Activated naive CD4-positive, alpha-beta T cell treated with anti-CD3 and anti-CD28 coated beads for 36 hours (primary cell): ENCODE measurements at regions of chr7 and their contacts with region 1.

Region 1: GRCh38 chr7:90178679-90179278 is 24.5 kb downstream of the STEAP1 start:
- DNase-seq: peak; percentile 63
- H3K4me3 Mint-ChIP-seq: peak overlapping the region; percentile 17
- H3K27ac Mint-ChIP-seq: peak overlapping the region; percentile 94
- H3K4me1 Mint-ChIP-seq: peaks cover 35% of the 10 kb centered on the region
- H3K27me3 Mint-ChIP-seq: peaks cover 8% of the 10 kb centered on the region

Region 2: DNA sequence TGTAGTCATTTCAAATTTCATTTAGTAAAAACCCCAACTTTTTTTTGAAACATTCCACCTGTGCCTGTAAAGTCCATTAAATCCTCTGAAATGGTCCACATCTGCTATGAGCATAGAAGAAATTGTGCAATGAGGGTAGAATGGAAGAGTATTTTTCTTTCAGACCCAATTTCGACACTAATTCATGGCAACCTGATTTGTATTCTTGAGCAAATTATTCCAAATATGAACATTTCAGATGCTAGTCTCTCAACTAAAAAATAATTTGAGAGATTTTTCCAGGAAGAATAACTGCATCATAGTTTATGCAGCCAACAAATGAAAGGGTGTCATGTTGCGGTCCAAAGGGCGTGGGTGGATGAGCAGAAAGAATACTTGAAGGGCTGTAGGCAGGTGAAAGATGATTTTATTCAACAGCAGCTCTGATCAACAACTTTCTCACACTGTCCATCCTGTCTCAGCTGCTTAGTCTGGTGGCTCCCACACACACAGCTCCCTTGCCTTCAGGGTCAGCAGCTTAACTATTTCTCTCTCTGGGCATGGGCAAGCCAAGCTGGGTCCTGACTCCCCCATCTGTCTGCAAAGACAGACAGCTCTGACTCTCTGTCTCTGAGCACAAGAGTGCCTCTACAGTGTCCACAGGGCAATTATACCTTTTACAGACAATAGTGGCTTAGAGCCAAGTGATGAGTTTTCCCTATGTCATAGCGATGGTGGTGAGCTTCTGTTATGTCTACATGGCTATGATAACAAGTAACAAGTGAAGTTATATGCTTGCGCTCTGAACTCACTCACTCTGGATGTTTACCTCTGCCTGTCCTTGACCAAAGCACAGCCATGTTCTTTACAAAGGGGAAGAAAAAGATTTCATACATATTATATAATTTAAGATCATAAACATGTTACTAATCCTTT is 44.3 kb after region 1 on chr7:
- CTCF ChIA-PET with region 1: no interaction called
- intact Hi-C with region 1: no loop called
- DNase-seq: no peak
- H3K4me3 Mint-ChIP-seq: no peak overlapping the region
- H3K27ac Mint-ChIP-seq: no peak overlapping the region
- H3K4me1 Mint-ChIP-seq: no peaks in the 10 kb centered on the region
- H3K27me3 Mint-ChIP-seq: peaks cover 37% of the 10 kb centered on the region

Region 3: GRCh38 chr7:90346336-90347125 is 167.8 kb after region 1 on chr7 and contains the start of gene GTPBP10:
- CTCF ChIA-PET with region 1: no interaction called
- intact Hi-C with region 1: loop called (anchors 1 kb)
- DNase-seq: peak; percentile 96
- H3K4me3 Mint-ChIP-seq: peak within 1 kb of the TSS; percentile 94
- H3K27ac Mint-ChIP-seq: peak within 1 kb of the TSS; percentile 96
- H3K4me1 Mint-ChIP-seq: peaks cover 34% of the 10 kb centered on the region
- H3K27me3 Mint-ChIP-seq: no peaks in the 10 kb centered on the region
- total RNA-seq, gene GTPBP10: 35.8 to 39.3 TPM

Region 4: GRCh38 chr7:90613088-90613498 is 434.3 kb after region 1 on chr7:
- CTCF ChIA-PET with region 1: no interaction called
- intact Hi-C with region 1: loop called (anchors 2 kb)
- DNase-seq: peak; percentile 50
- H3K4me3 Mint-ChIP-seq: no peak overlapping the region
- H3K27ac Mint-ChIP-seq: peak overlapping the region; percentile 70
- H3K4me1 Mint-ChIP-seq: peaks cover 18% of the 10 kb centered on the region
- H3K27me3 Mint-ChIP-seq: peaks cover 14% of the 10 kb centered on the region